HCT116 (cell line): ENCODE measurements at regions of chr7 and their contacts with region 1.

Region 1: GRCh38 chr7:32658034-32658944 is 163.0 kb downstream of the AVL9 start:
- DNase-seq: peak; percentile 84
- ATAC-seq: peak; percentile 91
- H3K4me3 ChIP-seq: peak overlapping the region in 1 of 2 experiments; percentile 8; a peak in 1 of 4 replicates
- H3K27ac ChIP-seq: peak overlapping the region; percentile 33
- H3K4me1 ChIP-seq: peaks cover 30 to 56% of the 10 kb centered on the region in 2 experiments
- H3K27me3 ChIP-seq: no peaks in the 10 kb centered on the region
- CTCF ChIP-seq: no peak
- POLR2A ChIP-seq: no peak
- RAD21 ChIP-seq: 0 out of 2 replicates have a peak, but pooled peaks have one; percentile 4

Region 2: GRCh38 chr7:32490127-32490822 is 168.0 kb before region 1 on chr7 and contains the start of gene LSM5:
- CTCF ChIA-PET with region 1: no interaction called
- POLR2A ChIA-PET with region 1: no interaction called
- RAD21 ChIA-PET with region 1: no interaction called
- intact Hi-C with region 1: loop called (anchors 2 kb)
- DNase-seq: peak; percentile 94
- ATAC-seq: peak; percentile 71
- H3K4me3 ChIP-seq: peak within 1 kb of the TSS; percentile 84 to 87
- H3K27ac ChIP-seq: peak within 1 kb of the TSS; percentile 77
- H3K4me1 ChIP-seq: peaks cover 10 to 22% of the 10 kb centered on the region in 2 experiments; a peak in 2 of 4 replicates
- H3K27me3 ChIP-seq: no peaks in the 10 kb centered on the region
- CTCF ChIP-seq: no peak
- POLR2A ChIP-seq: peak; percentile 20
- RAD21 ChIP-seq: peak; percentile 4; the same call in 1 of the 2 replicates
- total RNA-seq, gene LSM5: 81.0 TPM

Region 3: GRCh38 chr7:32588657-32589056 is 69.6 kb before region 1 on chr7:
- CTCF ChIA-PET with region 1: no interaction called
- POLR2A ChIA-PET with region 1: no interaction called
- RAD21 ChIA-PET with region 1: no interaction called
- intact Hi-C with region 1: no loop called
- DNase-seq: no peak
- ATAC-seq: peak; percentile 38
- H3K4me3 ChIP-seq: no peak overlapping the region
- H3K27ac ChIP-seq: no peak overlapping the region
- H3K4me1 ChIP-seq: no peaks in the 10 kb centered on the region; a peak in 1 of 4 replicates
- H3K27me3 ChIP-seq: no peaks in the 10 kb centered on the region
- CTCF ChIP-seq: no peak
- POLR2A ChIP-seq: no peak
- RAD21 ChIP-seq: no peak

Region 4: GRCh38 chr7:32670110-32671025 is 12.1 kb after region 1 on chr7:
- CTCF ChIA-PET with region 1: interaction called, 10 read pairs
- POLR2A ChIA-PET with region 1: interaction called, 24 read pairs
- RAD21 ChIA-PET with region 1: no interaction called
- intact Hi-C with region 1: no loop called
- DNase-seq: peak; percentile 84
- ATAC-seq: peak; percentile 70
- H3K4me3 ChIP-seq: peak overlapping the region; percentile 10 to 42; a peak in 3 of 4 replicates
- H3K27ac ChIP-seq: peak overlapping the region; percentile 96
- H3K4me1 ChIP-seq: peaks cover 43 to 71% of the 10 kb centered on the region in 2 experiments
- H3K27me3 ChIP-seq: no peaks in the 10 kb centered on the region
- CTCF ChIP-seq: no peak
- POLR2A ChIP-seq: no peak
- RAD21 ChIP-seq: peak; percentile 14; the same call in 1 of the 2 replicates

Region 5: DNA sequence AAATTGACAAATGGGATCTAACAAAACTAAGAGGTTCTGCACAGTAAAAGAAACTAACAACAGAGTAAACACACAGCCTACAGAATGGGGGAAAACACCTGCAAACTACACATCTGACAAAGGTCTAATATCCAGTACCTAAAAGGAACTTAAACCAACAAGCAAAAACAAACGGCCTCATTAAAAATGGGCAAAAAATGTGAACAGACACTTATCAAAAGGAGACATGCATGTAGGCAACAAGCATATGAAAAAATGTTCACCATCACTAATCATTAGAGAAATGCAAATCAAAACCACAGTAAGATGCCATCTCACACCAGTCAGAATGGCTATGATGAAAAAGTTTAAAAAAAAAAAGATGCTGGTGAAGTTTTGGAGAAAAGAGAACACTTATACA is 35.9 kb after region 1 on chr7:
- CTCF ChIA-PET with region 1: no interaction called
- POLR2A ChIA-PET with region 1: no interaction called
- RAD21 ChIA-PET with region 1: no interaction called
- intact Hi-C with region 1: no loop called
- DNase-seq: no peak
- ATAC-seq: no peak
- H3K4me3 ChIP-seq: no peak overlapping the region
- H3K27ac ChIP-seq: no peak overlapping the region
- H3K4me1 ChIP-seq: peaks cover 0 to 8% of the 10 kb centered on the region in 2 experiments; a peak in 1 of 4 replicates
- H3K27me3 ChIP-seq: no peaks in the 10 kb centered on the region
- CTCF ChIP-seq: no peak
- POLR2A ChIP-seq: no peak
- RAD21 ChIP-seq: no peak